K562 (cell line): ENCODE measurements at regions of chr5 and their contacts with region 1.

Region 1: GRCh38 chr5:103475629-103476240 is 86.9 kb downstream of the NUDT12 start:
- DNase-seq: peak; percentile 23 to 45 (median 30)
- ATAC-seq: peak; percentile 76
- H3K4me3 ChIP-seq: no peak overlapping the region
- H3K27ac ChIP-seq: no peak overlapping the region
- H3K4me1 ChIP-seq: no peaks in the 10 kb centered on the region
- H3K27me3 ChIP-seq: no peaks in the 10 kb centered on the region
- CTCF ChIP-seq: peak; percentile 37 to 76 (median 38); a peak in 3 of 6 replicates
- EP300 ChIP-seq: no peak
- POLR2A ChIP-seq: no peak
- RAD21 ChIP-seq: peak; percentile 80 to 85

Region 2: GRCh38 chr5:102545175-102545574 is 930.6 kb before region 1 on chr5:
- CTCF ChIA-PET with region 1: no interaction called
- POLR2A ChIA-PET with region 1: no interaction called
- in situ Hi-C with region 1: loop called (anchors 25 kb)
- intact Hi-C with region 1: no loop called
- DNase-seq: peak in 3 of 4 experiments; percentile 5 to 24 (median 6)
- ATAC-seq: peak; percentile 75
- H3K4me3 ChIP-seq: no peak overlapping the region
- H3K27ac ChIP-seq: no peak overlapping the region
- H3K4me1 ChIP-seq: no peaks in the 10 kb centered on the region
- H3K27me3 ChIP-seq: no peaks in the 10 kb centered on the region
- CTCF ChIP-seq: peak in 2 of 3 experiments; percentile 20 to 26; a peak in 2 of 6 replicates
- EP300 ChIP-seq: no peak
- POLR2A ChIP-seq: no peak
- RAD21 ChIP-seq: peak in 1 of 2 experiments; percentile 20; a peak in 2 of 4 replicates

Region 3: DNA sequence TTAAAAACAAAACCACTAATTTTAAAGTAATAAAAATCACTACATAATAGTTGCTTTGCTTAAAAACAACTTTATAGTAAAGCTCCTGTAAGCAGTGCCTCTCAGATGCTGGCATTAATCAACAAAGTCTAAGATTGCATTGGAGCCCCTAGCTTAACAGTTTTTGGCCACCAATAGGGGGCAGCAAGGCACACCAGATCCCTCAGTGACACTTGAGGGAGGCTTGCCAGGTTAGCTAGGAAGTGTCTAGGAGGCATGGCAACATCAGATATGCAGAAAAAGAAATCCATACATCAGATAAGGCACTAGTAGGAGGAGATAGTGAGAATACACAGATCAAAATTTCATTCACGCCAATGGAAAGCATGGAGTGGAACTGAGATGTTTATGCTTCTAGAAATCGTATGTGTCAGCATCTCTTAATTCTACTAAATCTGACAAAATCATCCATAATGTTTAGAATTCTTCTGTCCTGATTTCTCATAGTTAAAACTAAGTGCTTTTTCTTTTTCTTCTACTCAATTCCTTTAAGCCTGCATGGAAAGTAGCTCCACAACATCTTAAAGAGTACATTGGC is 794.2 kb before region 1 on chr5:
- CTCF ChIA-PET with region 1: no interaction called
- POLR2A ChIA-PET with region 1: no interaction called
- in situ Hi-C with region 1: no loop called
- intact Hi-C with region 1: loop called (anchors 10 kb)
- DNase-seq: peak; percentile 17 to 67 (median 37)
- ATAC-seq: peak; percentile 91
- H3K4me3 ChIP-seq: no peak overlapping the region
- H3K27ac ChIP-seq: no peak overlapping the region
- H3K4me1 ChIP-seq: no peaks in the 10 kb centered on the region
- H3K27me3 ChIP-seq: no peaks in the 10 kb centered on the region
- CTCF ChIP-seq: peak; percentile 61 to 74 (median 72)
- EP300 ChIP-seq: no peak
- POLR2A ChIP-seq: no peak
- RAD21 ChIP-seq: peak; percentile 63 to 72

Region 4: GRCh38 chr5:103232393-103232999 is 243.2 kb before region 1 on chr5:
- CTCF ChIA-PET with region 1: interaction called, 27 read pairs
- POLR2A ChIA-PET with region 1: no interaction called
- in situ Hi-C with region 1: loop called (anchors 5 kb)
- intact Hi-C with region 1: loop called (anchors 1 kb)
- DNase-seq: peak; percentile 32 to 52 (median 39)
- ATAC-seq: peak; percentile 96
- H3K4me3 ChIP-seq: no peak overlapping the region
- H3K27ac ChIP-seq: no peak overlapping the region
- H3K4me1 ChIP-seq: no peaks in the 10 kb centered on the region
- H3K27me3 ChIP-seq: peaks cover 0 to 4% of the 10 kb centered on the region in 2 experiments; a peak in 2 of 5 replicates
- CTCF ChIP-seq: peak; percentile 64 to 81 (median 67)
- EP300 ChIP-seq: no peak
- POLR2A ChIP-seq: no peak
- RAD21 ChIP-seq: peak; percentile 89 to 92

Region 5: DNA sequence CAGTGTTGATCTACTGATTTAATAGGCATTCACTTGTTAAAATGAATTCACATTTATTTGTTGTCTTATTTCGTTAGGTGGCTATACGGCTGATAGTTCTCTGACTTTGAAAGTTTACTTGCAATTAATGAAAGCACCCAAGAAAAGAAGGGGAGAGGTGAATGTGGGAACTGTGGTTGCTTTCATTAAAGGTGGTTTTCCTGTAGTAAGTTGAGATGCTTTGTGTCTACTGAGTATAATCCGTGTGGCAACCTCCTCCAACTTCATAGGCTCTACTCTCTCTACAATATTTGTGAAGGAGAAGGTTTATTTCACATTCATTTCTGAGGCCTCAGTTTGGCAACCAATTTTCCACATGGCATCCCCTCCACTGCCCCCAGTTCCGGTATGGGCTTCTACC is 230.0 kb before region 1 on chr5:
- CTCF ChIA-PET with region 1: no interaction called
- POLR2A ChIA-PET with region 1: no interaction called
- in situ Hi-C with region 1: no loop called
- intact Hi-C with region 1: loop called (anchors 5 kb)
- DNase-seq: no peak
- ATAC-seq: no peak
- H3K4me3 ChIP-seq: no peak overlapping the region
- H3K27ac ChIP-seq: no peak overlapping the region
- H3K4me1 ChIP-seq: no peaks in the 10 kb centered on the region
- H3K27me3 ChIP-seq: peaks cover 0 to 6% of the 10 kb centered on the region in 2 experiments; a peak in 2 of 5 replicates
- CTCF ChIP-seq: no peak
- EP300 ChIP-seq: no peak
- POLR2A ChIP-seq: no peak
- RAD21 ChIP-seq: no peak